Ascending aorta (tissue), 2 donors: ENCODE measurements at regions of chr15 and their contacts with region 1.

Region 1: DNA sequence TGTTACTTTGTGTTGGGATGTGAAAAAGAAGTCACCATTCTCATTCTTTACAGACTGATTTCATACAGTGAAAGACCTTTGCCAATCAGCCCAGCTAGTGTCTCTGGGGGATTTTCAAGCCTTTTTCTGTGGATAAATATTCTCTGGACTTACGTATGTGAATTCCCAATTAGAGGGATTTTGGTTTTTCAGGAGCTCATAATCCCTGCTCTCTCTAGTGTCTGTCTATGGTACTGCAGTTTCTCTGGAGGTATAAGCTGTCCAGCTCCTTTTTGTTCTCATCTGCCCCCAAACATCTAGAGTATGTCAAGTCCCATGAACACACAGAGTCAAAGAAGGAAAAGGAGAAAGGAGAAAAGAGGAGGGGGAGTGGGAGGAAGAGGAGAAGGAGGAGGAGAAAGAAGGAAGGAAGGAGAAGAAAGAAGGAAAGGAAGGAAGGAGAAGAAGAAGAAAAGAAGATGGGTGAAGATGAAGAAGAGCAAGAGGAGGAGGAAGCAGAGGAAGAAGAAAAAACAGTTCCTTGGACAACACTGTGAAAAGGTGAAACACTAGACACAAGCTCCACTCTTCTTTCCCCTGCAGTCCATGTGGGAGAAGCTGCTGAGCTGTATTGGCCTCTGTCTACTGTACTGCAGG is 218.6 kb downstream of the GREM1 start:
- DNase-seq: no peak
- H3K4me3 ChIP-seq: no peak overlapping the region
- H3K27ac ChIP-seq: no peak overlapping the region
- H3K4me1 ChIP-seq: no peaks in the 10 kb centered on the region
- H3K27me3 ChIP-seq: no peaks in the 10 kb centered on the region
- CTCF ChIP-seq: peak; percentile 44 to 59 (median 51)

Region 2: GRCh38 chr15:32849769-32850668 is 86.4 kb before region 1 on chr15:
- intact Hi-C with region 1: loop called (anchors 5 kb)
- DNase-seq: no peak
- H3K4me3 ChIP-seq: no peak overlapping the region
- H3K27ac ChIP-seq: peak overlapping the region in 1 of 2 donors; percentile 79
- H3K4me1 ChIP-seq: peaks cover 0 to 7% of the 10 kb centered on the region in 2 donors
- H3K27me3 ChIP-seq: no peaks in the 10 kb centered on the region
- CTCF ChIP-seq: no peak

Region 3: GRCh38 chr15:32861761-32862160 is 74.6 kb before region 1 on chr15:
- intact Hi-C with region 1: no loop called
- DNase-seq: no peak
- H3K4me3 ChIP-seq: peak overlapping the region; percentile 14 to 18
- H3K27ac ChIP-seq: peak overlapping the region; percentile 16 to 35
- H3K4me1 ChIP-seq: peaks cover 0 to under 1% of the 10 kb centered on the region in 2 donors
- H3K27me3 ChIP-seq: no peaks in the 10 kb centered on the region
- CTCF ChIP-seq: no peak